CD4-positive, alpha-beta T cell (primary cell): ENCODE measurements at regions of chr9 and their contacts with region 1.

Region 1: GRCh38 chr9:101176384-101176783 is 147.9 kb downstream of the PLPPR1 start:
- DNase-seq: no peak
- ATAC-seq: no peak
- H3K4me3 ChIP-seq: no peak overlapping the region
- H3K4me3 Mint-ChIP-seq: no peak overlapping the region
- H3K27ac ChIP-seq: no peak overlapping the region
- H3K27ac Mint-ChIP-seq: no peak overlapping the region
- H3K4me1 ChIP-seq: no peaks in the 10 kb centered on the region
- H3K4me1 Mint-ChIP-seq: no peaks in the 10 kb centered on the region
- H3K27me3 ChIP-seq: no peaks in the 10 kb centered on the region
- H3K27me3 Mint-ChIP-seq: no peaks in the 10 kb centered on the region
- CTCF ChIP-seq: no peak

Region 2: DNA sequence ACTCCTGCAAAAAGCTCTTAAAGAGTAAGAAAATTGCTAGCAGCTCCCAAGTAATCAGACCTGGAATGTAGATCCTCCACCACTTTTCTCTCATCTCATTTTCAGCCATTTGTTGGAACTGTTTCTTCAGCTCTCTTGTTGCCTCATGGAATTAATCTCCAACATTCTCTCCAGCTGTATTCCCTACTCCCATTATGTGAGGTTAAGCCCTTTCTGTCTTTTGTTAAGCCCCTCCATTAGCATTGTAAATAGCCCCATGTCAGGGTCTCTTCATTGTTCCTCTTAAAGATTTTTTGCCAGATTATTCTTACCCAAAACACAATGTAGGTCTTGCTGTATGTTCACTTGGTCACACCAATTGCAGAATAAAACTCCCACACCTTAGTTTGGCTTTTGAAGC is 28.0 kb before region 1 on chr9:
- CTCF ChIA-PET with region 1: no interaction called
- POLR2A ChIA-PET with region 1: no interaction called
- intact Hi-C with region 1: loop called in 1 of 2 experiments (anchors 1 kb)
- DNase-seq: no peak
- ATAC-seq: no peak
- H3K4me3 ChIP-seq: no peak overlapping the region
- H3K4me3 Mint-ChIP-seq: no peak overlapping the region
- H3K27ac ChIP-seq: no peak overlapping the region
- H3K27ac Mint-ChIP-seq: no peak overlapping the region
- H3K4me1 ChIP-seq: no peaks in the 10 kb centered on the region
- H3K4me1 Mint-ChIP-seq: no peaks in the 10 kb centered on the region
- H3K27me3 ChIP-seq: no peaks in the 10 kb centered on the region
- H3K27me3 Mint-ChIP-seq: no peaks in the 10 kb centered on the region
- CTCF ChIP-seq: no peak